ENCODE measurements at regions of chr10 and their contacts with region 1.

Region 1: GRCh38 chr10:117496616-117497028 is 45.9 kb upstream of the EMX2 start:
- DNase-seq: peak; percentile 80
- H3K4me3 ChIP-seq: no peak overlapping the region
- H3K27ac ChIP-seq: no peak overlapping the region
- H3K4me1 ChIP-seq: peaks cover 5% of the 10 kb centered on the region
- H3K27me3 ChIP-seq: peaks cover 5% of the 10 kb centered on the region
- CTCF ChIP-seq: peak; percentile 94 to 97

Region 2: DNA sequence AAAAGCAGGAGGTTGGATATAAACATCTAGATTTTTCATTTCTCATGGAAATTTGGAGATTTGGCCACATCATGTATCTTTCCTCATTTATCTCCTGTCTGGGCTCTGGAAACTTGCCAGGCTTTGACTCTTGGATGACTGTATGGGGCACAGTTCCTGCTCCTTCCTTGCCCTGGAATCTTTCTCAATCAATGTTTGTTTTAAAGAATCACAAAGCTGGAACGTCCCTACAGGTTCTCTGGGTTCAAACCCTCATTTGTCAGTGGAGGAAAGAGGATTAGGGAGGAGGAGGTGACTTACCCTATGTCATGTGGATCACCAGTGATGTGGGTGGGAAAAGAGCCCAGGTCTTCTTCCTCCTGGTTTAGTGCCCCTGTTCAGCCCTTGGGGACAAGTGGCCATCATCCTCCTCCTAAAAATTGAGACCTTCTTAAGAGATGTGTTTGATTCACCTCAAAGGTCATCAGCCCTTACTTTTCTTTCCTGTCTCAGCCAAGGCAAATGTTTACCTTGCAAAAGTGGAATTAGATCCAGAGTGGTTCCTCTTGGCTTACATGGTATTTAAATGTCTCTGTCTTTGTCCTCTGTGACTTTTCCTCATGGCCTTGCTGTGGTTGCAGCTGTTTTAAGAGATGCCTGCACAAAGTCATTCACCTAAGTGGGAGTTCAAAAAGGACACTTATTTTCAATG is 82.5 kb before region 1 on chr10:
- CTCF ChIA-PET with region 1: no interaction called
- dilution Hi-C with region 1: no loop called
- in situ Hi-C with region 1: no loop called
- intact Hi-C with region 1: no loop called
- DNase-seq: peak; percentile 84
- H3K4me3 ChIP-seq: no peak overlapping the region
- H3K27ac ChIP-seq: no peak overlapping the region
- H3K4me1 ChIP-seq: peaks cover 33% of the 10 kb centered on the region
- H3K27me3 ChIP-seq: no peaks in the 10 kb centered on the region
- CTCF ChIP-seq: no peak

Region 3: GRCh38 chr10:117511601-117512390 is 15.2 kb after region 1 on chr10:
- CTCF ChIA-PET with region 1: no interaction called
- dilution Hi-C with region 1: no loop called
- in situ Hi-C with region 1: no loop called
- intact Hi-C with region 1: no loop called
- DNase-seq: no peak
- H3K4me3 ChIP-seq: no peak overlapping the region
- H3K27ac ChIP-seq: no peak overlapping the region
- H3K4me1 ChIP-seq: no peaks in the 10 kb centered on the region
- H3K27me3 ChIP-seq: peaks cover 8% of the 10 kb centered on the region
- CTCF ChIP-seq: no peak

Region 4: GRCh38 chr10:117684672-117685271 is 188.2 kb after region 1 on chr10:
- CTCF ChIA-PET with region 1: no interaction called
- dilution Hi-C with region 1: no loop called
- in situ Hi-C with region 1: no loop called
- intact Hi-C with region 1: loop called (anchors 2 kb)
- DNase-seq: no peak
- H3K4me3 ChIP-seq: no peak overlapping the region
- H3K27ac ChIP-seq: no peak overlapping the region
- H3K4me1 ChIP-seq: peaks cover 8% of the 10 kb centered on the region
- H3K27me3 ChIP-seq: no peaks in the 10 kb centered on the region
- CTCF ChIP-seq: peak in 1 of 2 donors; percentile 36

Region 5: GRCh38 chr10:118412932-118413331 is 916.3 kb after region 1 on chr10:
- CTCF ChIA-PET with region 1: no interaction called
- dilution Hi-C with region 1: no loop called
- in situ Hi-C with region 1: no loop called
- intact Hi-C with region 1: loop called (anchors 1 kb)
- DNase-seq: no peak
- H3K4me3 ChIP-seq: no peak overlapping the region
- H3K27ac ChIP-seq: no peak overlapping the region
- H3K4me1 ChIP-seq: no peaks in the 10 kb centered on the region
- H3K27me3 ChIP-seq: peaks cover 3% of the 10 kb centered on the region
- CTCF ChIP-seq: no peak

Region 6: GRCh38 chr10:118459726-118460193 is 963.1 kb after region 1 on chr10:
- CTCF ChIA-PET with region 1: interaction called, 3 read pairs
- dilution Hi-C with region 1: no loop called
- in situ Hi-C with region 1: no loop called
- intact Hi-C with region 1: loop called (anchors 1 kb)
- DNase-seq: peak; percentile 52
- H3K4me3 ChIP-seq: no peak overlapping the region
- H3K27ac ChIP-seq: no peak overlapping the region
- H3K4me1 ChIP-seq: no peaks in the 10 kb centered on the region
- H3K27me3 ChIP-seq: no peaks in the 10 kb centered on the region
- CTCF ChIP-seq: peak; percentile 67 to 84

Measured in mammary epithelial cell (primary cell).